CD4-positive, alpha-beta memory T cell (primary cell): ENCODE measurements at regions of chr2 and their contacts with region 1.

Region 1: DNA sequence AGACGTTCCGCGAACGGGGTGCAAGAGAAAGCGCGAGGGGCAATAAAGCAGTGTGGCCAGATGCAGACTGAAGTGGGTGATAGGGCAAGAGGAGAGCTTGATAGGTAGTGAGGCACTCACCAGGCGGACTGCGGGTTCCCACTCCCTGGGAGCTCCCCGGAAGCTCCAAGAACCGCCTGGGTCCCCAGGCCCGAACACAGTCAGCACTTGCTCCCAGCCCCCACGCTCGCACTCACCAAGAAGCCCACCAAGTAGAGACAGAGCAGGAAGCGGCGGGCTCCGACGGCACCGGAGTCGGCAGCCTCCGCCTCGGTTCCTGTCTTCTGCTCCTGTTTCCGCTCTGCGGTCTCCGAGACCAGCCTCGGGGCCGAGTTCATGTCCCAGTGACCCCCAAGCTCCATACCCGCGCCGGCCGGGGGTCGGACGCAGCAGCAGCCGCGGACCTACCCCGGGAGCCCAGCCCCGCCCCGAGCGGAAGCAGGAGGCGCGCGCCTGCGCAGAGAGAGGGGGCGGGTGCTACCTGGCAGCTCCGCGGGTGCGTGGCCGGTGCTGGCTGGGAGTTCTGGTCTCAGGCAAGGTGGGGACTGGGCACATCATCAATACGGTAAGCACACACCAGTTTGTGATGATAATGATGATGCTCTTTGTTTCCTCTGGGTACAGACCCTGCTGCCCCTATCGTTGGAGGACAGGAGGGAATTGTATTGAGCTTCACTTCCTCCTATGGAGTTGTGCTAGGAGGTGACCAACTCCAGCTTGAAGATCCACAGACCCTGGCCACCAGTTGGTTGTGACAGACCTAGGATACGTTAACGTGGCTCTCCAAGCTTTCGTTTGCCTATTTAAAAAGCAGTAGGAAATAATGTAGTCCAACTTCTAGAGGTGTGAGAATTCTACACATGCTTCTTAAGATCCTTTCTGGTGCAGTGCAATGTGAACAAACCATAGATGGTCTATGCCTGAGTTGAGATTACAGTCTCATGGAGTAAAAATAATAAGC is 25.1 kb upstream of the TMEM182 start:
- DNase-seq: peak; percentile 80 to 84 (median 82)
- H3K4me3 ChIP-seq: peak overlapping the region; percentile 63 to 87
- H3K4me3 Mint-ChIP-seq: peak overlapping the region; percentile 96 to 98 (median 98)
- H3K27ac ChIP-seq: peak overlapping the region; percentile 55
- H3K27ac Mint-ChIP-seq: peak overlapping the region; percentile 73 to 95 (median 92)
- H3K4me1 ChIP-seq: peaks cover 35% of the 10 kb centered on the region
- H3K4me1 Mint-ChIP-seq: peaks cover 29 to 49% (median 38%) of the 10 kb centered on the region in 4 donors
- H3K27me3 ChIP-seq: no peaks in the 10 kb centered on the region
- H3K27me3 Mint-ChIP-seq: peaks cover 0 to 3% of the 10 kb centered on the region in 2 donors

Region 2: DNA sequence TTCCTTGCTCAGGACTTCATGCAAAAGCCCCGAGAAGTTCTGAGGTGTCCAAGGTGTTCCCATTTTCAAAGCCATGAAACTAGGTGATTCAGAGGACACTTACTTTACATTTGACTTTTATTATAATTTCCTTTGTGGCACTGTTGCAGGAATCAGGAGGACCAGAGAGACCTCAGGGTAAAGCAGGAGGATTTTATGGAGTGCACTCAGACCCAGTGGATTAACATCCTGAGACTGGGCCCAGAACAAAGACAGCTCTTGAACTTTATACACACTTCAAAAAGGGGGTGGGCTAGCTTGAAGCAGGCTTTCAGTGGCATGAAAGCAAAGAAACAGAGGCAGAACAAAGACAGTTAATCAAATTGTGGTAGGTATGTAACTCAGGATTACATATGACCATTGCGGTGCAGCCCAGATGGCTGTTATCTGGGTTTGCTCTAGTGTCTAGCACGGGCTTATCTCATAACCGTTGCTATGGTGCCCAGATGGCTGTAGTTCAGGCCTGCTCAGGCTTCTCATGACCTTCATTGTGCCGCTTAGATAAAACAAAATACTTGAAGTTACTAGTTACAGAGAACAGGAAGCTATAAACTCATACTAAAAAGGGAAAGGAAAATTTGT is 64.5 kb after region 1 on chr2:
- CTCF ChIA-PET with region 1: interaction called, 6 read pairs
- POLR2A ChIA-PET with region 1: no interaction called
- intact Hi-C with region 1: loop called (anchors 5 kb)
- DNase-seq: no peak
- H3K4me3 ChIP-seq: no peak overlapping the region
- H3K4me3 Mint-ChIP-seq: no peak overlapping the region
- H3K27ac ChIP-seq: no peak overlapping the region
- H3K27ac Mint-ChIP-seq: no peak overlapping the region
- H3K4me1 ChIP-seq: peaks cover 16% of the 10 kb centered on the region
- H3K4me1 Mint-ChIP-seq: peaks cover 13 to 22% (median 15%) of the 10 kb centered on the region in 4 donors
- H3K27me3 ChIP-seq: no peaks in the 10 kb centered on the region
- H3K27me3 Mint-ChIP-seq: no peaks in the 10 kb centered on the region